ENCODE measurements at regions of chr5 and their contacts with region 1.

Region 1: DNA sequence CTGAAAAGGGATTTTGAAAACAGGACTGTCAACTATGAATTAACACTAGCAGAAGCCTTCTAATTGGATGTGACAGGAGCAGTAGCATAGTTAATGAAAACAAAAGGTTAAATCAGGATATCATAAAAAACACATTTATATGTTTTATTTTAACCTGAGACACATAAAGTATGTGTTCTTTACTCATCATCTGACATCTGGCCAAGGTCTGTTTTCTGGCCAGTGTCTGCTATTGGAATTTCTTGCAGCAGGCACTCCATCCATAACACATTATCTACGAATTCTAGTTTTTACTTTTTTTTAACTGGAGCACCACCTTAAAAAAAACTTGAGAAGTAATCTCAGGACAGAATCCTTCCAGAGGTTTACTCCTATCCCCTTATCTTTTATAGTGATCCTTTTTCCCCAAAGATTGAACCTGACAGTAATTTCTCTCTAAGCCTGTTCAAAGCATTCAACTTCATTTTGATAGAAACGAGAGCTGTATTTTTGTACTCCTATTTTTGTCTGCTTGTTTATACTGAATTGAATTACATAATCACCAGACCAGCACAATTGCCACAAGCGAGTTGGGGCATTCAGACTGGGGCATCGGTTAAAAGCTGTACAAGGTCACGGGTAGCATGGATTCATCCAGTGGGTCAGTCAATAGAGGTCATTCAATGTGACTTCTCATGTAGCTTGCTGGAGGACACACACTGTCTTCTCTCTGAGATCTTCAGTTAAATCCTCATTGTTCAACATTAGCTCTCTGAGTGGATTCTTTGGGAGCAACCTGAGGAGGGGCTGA is 205.6 kb upstream of the CLINT1 start:
- DNase-seq: no peak
- ATAC-seq: peak in 1 of 2 donors; percentile 54

Region 2: GRCh38 chr5:157845894-157846598 is 218.5 kb before region 1 on chr5:
- intact Hi-C with region 1: loop called in 1 of 2 experiments (anchors 5 kb)
- DNase-seq: no peak
- ATAC-seq: no peak

Region 3: DNA sequence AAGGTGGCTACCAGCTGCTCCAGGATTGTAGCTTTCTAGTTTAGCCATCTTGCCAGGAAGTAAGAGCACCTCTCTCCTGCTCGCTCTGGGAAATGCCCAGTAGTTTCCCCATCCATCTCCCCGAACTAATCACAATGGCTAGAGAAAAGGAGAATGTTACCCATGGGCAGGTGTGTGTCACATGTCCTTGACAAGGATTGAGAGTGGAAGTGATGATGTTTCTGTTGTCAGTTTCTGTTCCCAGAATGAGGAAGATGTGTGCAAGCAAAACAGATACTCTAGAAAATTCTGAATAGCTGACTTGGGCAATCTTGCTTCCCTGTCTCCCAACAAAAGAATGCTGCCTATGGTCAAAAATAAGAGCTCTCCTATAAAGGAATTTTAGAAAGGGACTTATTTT is 605.7 kb after region 1 on chr5:
- intact Hi-C with region 1: no loop called
- DNase-seq: no peak
- ATAC-seq: no peak

Region 4: GRCh38 chr5:158802941-158803341 is 738.4 kb after region 1 on chr5:
- intact Hi-C with region 1: no loop called
- DNase-seq: no peak
- ATAC-seq: peak; percentile 64 to 81

Measured in left cardiac atrium (tissue), 4 donors.